ENCODE measurements at regions of chr12 and their contacts with region 1.

Region 1: GRCh38 chr12:124767066-124767821 is 96.4 kb downstream of the SCARB1 start:
- DNase-seq: peak; percentile 88 to 94
- ATAC-seq: peak; percentile 89
- H3K4me3 ChIP-seq: no peak overlapping the region
- H3K27ac ChIP-seq: no peak overlapping the region
- H3K4me1 ChIP-seq: peaks cover 0 to 2% of the 10 kb centered on the region in 2 donors
- H3K27me3 ChIP-seq: no peaks in the 10 kb centered on the region

Region 2: GRCh38 chr12:124036674-124037109 is 730.6 kb before region 1 on chr12:
- intact Hi-C with region 1: loop called (anchors 2 to 5 kb)
- DNase-seq: no peak
- ATAC-seq: peak; percentile 55
- H3K4me3 ChIP-seq: no peak overlapping the region
- H3K27ac ChIP-seq: no peak overlapping the region
- H3K4me1 ChIP-seq: no peaks in the 10 kb centered on the region
- H3K27me3 ChIP-seq: no peaks in the 10 kb centered on the region

Region 3: DNA sequence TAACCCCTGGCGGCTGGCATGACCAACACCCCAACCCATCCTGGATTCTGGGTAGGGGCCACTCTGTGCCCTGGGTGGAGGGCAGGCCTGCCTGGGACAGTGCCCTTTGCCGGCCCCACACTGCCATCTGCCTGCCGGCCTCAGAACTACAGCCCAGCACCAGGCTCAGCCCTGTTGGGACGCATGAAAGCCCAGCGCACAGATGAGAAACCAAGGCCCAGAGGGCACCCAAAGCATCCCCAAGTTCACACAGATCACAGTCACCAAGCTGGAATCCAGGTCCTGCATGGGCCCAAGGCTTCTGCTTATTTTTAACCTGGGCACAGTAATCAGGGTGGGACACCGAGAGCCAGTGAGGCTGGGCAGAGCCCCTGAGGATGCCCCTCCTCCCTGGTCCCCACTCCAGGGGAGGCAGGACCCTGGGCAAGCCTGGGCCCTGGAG is 446.2 kb before region 1 on chr12:
- intact Hi-C with region 1: loop called in 1 of 2 experiments (anchors 10 kb)
- DNase-seq: peak; percentile 80 to 93
- ATAC-seq: peak; percentile 90
- H3K4me3 ChIP-seq: no peak overlapping the region
- H3K27ac ChIP-seq: no peak overlapping the region
- H3K4me1 ChIP-seq: no peaks in the 10 kb centered on the region
- H3K27me3 ChIP-seq: no peaks in the 10 kb centered on the region

Region 4: DNA sequence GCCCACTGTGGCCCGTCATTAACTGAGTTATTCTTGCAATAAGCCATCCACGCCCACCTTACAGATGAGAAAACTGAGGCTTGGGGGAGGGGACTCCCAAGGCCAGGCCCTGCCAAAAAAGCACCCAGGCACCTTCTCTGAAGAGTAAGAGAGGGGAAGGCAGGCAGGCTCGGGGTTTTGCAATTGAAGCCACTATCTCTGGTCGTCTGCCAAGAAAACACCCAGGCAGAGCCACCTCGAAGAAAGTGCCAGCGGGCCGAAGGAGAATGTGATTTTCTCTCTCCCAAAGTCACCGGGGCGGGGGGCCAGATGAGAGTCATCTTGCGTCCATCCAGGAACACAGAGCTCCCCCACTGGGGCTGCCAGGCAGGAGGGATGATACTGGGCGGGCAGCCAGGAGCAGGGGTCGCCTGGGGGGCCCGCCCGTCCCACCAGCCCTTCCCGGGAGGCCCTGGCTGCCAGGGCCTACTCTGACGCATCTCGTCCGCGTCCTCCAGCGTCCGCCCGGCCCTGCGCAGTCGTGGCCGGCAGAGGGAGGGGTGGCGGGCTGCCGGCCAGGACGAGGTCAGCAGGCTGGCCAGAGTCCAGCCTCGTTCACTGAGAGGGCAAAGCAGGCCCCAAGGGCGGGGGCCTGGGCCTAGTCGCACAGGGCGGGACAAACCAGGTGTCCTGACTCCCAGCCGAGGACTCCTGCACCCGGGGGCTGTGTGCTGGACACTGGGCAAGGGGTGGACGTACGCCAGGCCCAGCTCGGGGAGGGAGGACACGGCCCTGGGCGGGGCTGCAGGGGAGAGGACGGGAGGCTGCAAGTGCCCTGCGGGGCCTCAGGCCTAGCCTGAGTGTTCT is 398.0 kb before region 1 on chr12:
- intact Hi-C with region 1: loop called in 1 of 2 experiments (anchors 5 kb)
- DNase-seq: peak; percentile 91 to 96
- ATAC-seq: peak; percentile 92
- H3K4me3 ChIP-seq: no peak overlapping the region
- H3K27ac ChIP-seq: peak overlapping the region; percentile 49 to 76
- H3K4me1 ChIP-seq: no peaks in the 10 kb centered on the region
- H3K27me3 ChIP-seq: no peaks in the 10 kb centered on the region

Region 5: GRCh38 chr12:124506145-124506831 is 261.0 kb before region 1 on chr12:
- intact Hi-C with region 1: loop called in 1 of 2 experiments (anchors 10 kb)
- DNase-seq: peak; percentile 91 to 93
- ATAC-seq: peak; percentile 56
- H3K4me3 ChIP-seq: no peak overlapping the region
- H3K27ac ChIP-seq: peak overlapping the region in 1 of 2 donors; percentile 43
- H3K4me1 ChIP-seq: no peaks in the 10 kb centered on the region
- H3K27me3 ChIP-seq: no peaks in the 10 kb centered on the region

Region 6: DNA sequence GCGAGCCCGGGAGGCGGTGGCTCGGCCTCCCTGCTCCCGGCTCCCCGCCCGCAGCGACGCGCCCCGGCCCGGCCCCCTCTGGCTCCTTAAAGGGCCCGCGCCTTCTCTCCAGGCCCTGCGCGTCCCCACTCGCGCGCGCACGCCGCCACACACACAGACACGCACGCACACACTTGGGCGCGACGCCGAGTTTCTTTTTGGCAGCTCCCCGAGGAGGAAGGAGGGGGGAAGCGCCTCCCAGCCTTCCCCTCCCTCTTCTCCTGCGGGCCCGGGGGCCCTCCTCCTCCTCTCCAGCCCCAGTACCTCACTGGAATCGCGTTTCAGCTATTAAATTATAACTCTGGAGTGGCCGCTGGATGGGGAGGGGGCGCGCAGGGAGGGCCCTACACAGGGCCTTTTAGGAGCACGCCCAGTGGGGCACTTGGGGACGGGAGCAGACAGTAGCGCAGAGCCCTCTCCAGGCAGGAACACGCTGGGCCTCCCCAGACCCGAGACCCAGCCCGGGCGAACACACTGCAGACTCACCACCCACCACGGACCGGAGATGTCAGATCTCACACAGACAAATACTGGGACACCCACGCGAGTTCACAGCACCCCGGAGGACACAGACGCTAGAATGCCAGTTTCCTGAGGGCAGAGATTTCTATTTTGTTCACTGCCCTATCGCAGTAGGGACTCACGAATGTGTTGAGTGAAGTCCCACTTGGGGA is 199.4 kb before region 1 on chr12:
- intact Hi-C with region 1: loop called (anchors 2 to 5 kb)
- DNase-seq: peak; percentile 98
- ATAC-seq: peak; percentile 92
- H3K4me3 ChIP-seq: no peak overlapping the region
- H3K27ac ChIP-seq: peak overlapping the region in 1 of 2 donors; percentile 75
- H3K4me1 ChIP-seq: no peaks in the 10 kb centered on the region
- H3K27me3 ChIP-seq: no peaks in the 10 kb centered on the region